Prostate gland (tissue), 2 donors: ENCODE measurements at regions of chr22 and their contacts with region 1.

Region 1: GRCh38 chr22:49137206-49137840 is 690.4 kb downstream of the BRD1 start:
- DNase-seq: no peak
- H3K4me3 ChIP-seq: no peak overlapping the region
- H3K27ac ChIP-seq: no peak overlapping the region
- H3K4me1 ChIP-seq: no peaks in the 10 kb centered on the region
- H3K27me3 ChIP-seq: peaks cover 6% of the 10 kb centered on the region
- CTCF ChIP-seq: no peak
- POLR2A ChIP-seq: no peak

Region 2: DNA sequence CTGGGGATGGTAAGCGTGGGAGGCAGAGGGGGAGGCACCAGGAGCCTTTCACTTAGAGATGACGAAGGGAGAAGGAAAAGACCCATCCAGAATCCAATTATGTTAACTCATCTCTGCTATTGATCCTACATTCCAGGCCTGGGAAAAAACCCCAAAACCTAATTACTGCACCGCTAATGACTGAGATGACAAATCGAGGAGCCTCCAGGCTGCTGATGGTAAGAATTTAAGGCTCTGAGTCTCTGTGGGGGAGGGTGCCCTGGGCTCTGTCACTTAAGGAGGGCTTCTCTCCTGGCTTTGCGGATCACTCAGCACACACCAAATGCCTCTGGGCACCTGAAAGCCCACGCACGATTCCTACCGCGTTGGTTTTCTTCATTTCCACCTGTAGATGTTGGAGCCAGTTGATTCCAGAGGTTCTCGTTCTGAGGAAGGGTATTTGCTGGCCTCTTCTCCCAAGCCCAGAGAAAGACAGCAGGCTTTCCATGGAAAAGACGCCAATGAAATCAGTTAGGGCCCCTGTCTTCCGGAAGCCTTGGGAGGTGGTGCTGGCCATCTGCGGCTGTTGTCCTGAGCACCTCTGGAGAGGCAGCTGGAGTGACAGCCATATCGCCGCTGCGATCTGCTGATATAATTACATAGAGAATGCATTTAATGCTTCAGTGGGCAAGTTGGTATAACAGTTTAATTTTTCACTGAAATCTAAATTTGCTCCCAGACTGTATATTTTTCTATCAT is 60.9 kb before region 1 on chr22:
- intact Hi-C with region 1: loop called (anchors 10 kb)
- DNase-seq: no peak
- H3K4me3 ChIP-seq: no peak overlapping the region
- H3K27ac ChIP-seq: no peak overlapping the region
- H3K4me1 ChIP-seq: no peaks in the 10 kb centered on the region
- H3K27me3 ChIP-seq: peaks cover 13% of the 10 kb centered on the region
- CTCF ChIP-seq: no peak
- POLR2A ChIP-seq: no peak

Region 3: GRCh38 chr22:49156660-49157285 is 19.4 kb after region 1 on chr22:
- intact Hi-C with region 1: no loop called
- DNase-seq: peak; percentile 55
- H3K4me3 ChIP-seq: no peak overlapping the region
- H3K27ac ChIP-seq: no peak overlapping the region
- H3K4me1 ChIP-seq: no peaks in the 10 kb centered on the region
- H3K27me3 ChIP-seq: peaks cover 16% of the 10 kb centered on the region
- CTCF ChIP-seq: no peak
- POLR2A ChIP-seq: no peak

Region 4: DNA sequence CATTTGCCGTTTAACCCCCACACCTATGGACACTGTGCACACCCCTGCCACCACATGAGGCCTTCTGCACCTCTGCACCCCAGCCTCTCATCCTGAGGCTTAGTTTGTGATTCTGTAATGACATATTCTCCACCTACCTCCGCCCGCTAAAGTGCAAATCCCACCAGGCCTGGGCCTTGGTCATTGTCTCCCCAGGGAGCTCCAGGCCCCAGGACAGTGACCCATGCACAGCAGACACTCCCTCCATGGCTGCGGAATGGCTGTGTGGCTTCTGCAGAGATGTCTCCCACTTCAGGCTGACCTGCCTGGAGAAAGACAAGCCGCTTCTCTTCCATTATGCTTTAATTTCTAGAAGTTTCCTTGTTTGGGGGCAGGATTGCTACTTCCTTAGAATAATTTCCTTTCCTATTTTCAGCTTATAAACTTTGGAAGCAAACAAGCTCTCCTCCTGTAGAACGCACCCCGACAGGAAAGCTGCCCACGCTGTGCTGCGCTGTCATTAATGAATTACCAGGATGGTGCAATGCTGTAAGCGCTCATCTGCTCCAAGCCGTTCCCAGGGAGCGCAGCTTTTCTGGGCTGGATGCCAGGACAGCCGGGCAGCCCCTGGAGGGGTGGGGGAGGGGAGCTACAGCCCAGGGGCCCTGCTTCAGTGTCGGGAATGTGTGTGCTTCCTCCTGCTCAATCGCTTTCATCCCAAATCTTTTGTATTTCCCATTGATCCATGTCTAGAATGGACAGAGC is 72.3 kb after region 1 on chr22:
- intact Hi-C with region 1: no loop called
- DNase-seq: no peak
- H3K4me3 ChIP-seq: no peak overlapping the region
- H3K27ac ChIP-seq: no peak overlapping the region
- H3K4me1 ChIP-seq: no peaks in the 10 kb centered on the region
- H3K27me3 ChIP-seq: peaks cover 14% of the 10 kb centered on the region
- CTCF ChIP-seq: no peak
- POLR2A ChIP-seq: no peak